ENCODE measurements at regions of chr3 and their contacts with region 1.

Region 1: DNA sequence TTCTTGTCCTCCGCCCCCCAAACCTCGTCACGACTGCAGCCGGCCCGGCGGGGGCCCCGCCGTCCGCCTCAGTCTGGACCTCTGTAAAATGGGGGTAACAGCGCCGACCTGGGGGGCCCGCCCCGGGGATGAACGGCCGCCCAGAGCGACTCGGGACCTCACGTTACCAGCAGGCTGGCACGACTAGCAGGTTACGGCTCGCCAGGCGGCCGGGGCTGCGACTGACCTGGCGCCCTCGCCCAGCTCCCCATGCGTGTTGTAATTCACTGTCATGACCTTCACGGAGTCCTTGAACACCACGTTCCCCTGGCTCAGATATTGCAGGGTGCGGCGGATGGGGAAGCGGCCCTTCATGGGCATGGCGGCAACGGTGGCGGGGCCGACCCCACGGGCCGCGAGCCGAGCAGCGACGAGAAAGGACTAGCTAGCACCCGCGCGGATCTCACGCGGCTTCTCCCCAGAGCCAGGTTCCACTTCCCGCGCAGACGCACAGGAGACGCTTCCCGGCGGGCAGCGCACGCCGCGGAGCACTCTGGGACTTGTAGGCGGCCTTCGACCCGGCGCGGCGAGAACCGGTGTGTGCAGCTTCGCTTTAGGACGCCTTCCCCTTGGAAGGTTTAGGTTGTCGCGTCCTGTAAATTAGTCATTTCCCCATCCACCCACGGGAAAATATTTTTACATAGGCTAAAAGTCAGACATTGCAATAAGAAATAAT is at the start of gene MRPS25:
- DNase-seq: peak; percentile 94
- ATAC-seq: peak; percentile 99
- H3K4me3 Mint-ChIP-seq: peak within 1 kb of the TSS; percentile 96
- H3K27ac Mint-ChIP-seq: peak within 1 kb of the TSS; percentile 97
- H3K4me1 Mint-ChIP-seq: peaks cover 16% of the 10 kb centered on the region
- H3K27me3 Mint-ChIP-seq: no peaks in the 10 kb centered on the region
- CTCF ChIP-seq: no peak
- total RNA-seq, gene MRPS25: 73.9 to 78.2 TPM

Region 2: DNA sequence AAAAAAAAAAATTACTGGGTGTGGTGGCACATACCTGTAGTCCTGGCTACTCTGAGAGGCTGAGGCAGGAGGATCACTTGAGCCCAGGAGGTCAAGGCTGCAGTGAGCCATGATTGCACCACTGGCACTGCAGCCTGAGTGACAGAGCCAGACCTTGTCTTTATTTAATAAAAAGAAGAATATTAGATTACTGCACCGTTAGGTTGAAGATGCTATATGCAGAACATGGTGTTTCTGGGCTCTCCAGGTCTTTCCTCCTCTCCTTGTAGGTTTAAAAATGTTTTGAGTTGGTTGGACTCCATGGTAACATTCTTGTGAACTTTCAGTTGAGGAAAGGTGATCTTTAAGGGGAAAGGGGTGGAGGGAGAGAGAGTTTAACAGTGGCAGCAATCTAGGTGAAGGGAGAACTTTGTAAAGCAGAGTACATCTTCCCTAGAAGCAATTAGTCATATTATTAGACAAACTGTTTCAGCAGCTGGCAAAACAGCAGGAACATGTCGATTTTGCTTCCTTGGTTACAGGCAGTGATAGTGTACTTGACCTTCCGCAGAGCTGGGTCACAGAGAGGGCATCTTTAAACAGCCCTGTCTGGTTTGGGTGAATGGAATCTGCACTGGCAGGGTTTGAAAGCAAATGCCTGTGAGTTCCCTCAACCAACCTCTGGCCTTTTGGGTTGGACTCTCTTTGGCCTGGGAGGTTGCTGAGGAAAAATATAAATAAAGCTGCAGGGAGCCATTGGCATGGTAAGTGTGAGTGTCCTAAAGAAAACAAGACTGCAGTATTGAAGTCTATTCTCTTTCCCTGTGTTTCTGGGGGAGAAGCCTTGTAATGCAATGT is 74.8 kb before region 1 on chr3:
- CTCF ChIA-PET with region 1: no interaction called
- POLR2A ChIA-PET with region 1: no interaction called
- intact Hi-C with region 1: no loop called
- DNase-seq: no peak
- ATAC-seq: no peak
- H3K4me3 Mint-ChIP-seq: no peak overlapping the region
- H3K27ac Mint-ChIP-seq: no peak overlapping the region
- H3K4me1 Mint-ChIP-seq: peaks cover 49% of the 10 kb centered on the region
- H3K27me3 Mint-ChIP-seq: no peaks in the 10 kb centered on the region
- CTCF ChIP-seq: no peak

Region 3: DNA sequence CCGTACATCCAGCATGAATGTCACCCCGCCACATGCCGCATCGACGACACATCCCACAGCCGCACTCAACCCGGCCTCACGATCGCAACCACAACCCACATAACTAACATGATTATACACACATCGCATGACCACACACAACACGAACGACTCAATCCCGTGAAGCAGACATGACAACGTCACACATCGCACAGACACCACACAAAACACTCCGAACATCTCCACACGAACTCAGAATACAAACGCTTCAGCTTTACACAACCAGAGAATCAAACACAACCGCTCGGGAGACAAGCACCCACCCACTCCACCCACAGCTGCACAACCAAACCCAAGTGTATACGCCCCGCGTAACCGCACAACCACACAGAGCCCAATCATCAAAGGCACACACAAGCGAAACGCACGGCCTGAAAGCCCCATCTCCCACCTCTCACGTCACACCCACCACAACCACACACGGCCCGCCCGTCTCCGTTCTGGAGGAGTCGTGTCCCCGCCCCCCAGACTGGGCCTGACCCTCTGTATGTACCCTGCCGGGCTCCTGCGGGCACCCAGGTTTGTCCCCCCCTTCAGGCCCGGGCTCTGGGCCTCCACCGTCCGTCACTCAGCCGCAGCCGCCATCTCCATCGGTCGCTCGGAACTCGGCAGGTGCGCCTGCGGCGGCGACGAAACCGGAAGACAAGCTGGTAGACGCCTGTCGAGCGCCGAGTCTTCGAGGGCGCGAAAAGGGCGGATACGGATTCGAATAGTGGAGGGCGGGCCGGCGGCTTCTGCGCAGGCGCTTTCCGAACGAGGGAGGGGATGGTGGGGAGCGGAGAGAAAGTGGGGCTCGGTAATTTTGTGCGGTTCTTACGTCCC is 33.7 kb after region 1 on chr3 and contains the start of gene RBSN:
- CTCF ChIA-PET with region 1: no interaction called
- POLR2A ChIA-PET with region 1: interaction called, 40 read pairs
- intact Hi-C with region 1: no loop called
- DNase-seq: peak; percentile 98
- ATAC-seq: peak; percentile 90
- H3K4me3 Mint-ChIP-seq: peak within 1 kb of the TSS; percentile 90
- H3K27ac Mint-ChIP-seq: peak within 1 kb of the TSS; percentile 96
- H3K4me1 Mint-ChIP-seq: peaks cover 16% of the 10 kb centered on the region
- H3K27me3 Mint-ChIP-seq: peaks cover 2% of the 10 kb centered on the region
- CTCF ChIP-seq: no peak
- total RNA-seq, gene RBSN: 11.3 to 11.8 TPM

Measured in activated CD8-positive, alpha-beta T cell treated with anti-CD3 and anti-CD28 coated beads for 36 hours (primary cell).